CD8-positive, alpha-beta T cell (primary cell): ENCODE measurements at regions of chr18 and their contacts with region 1.

Region 1: DNA sequence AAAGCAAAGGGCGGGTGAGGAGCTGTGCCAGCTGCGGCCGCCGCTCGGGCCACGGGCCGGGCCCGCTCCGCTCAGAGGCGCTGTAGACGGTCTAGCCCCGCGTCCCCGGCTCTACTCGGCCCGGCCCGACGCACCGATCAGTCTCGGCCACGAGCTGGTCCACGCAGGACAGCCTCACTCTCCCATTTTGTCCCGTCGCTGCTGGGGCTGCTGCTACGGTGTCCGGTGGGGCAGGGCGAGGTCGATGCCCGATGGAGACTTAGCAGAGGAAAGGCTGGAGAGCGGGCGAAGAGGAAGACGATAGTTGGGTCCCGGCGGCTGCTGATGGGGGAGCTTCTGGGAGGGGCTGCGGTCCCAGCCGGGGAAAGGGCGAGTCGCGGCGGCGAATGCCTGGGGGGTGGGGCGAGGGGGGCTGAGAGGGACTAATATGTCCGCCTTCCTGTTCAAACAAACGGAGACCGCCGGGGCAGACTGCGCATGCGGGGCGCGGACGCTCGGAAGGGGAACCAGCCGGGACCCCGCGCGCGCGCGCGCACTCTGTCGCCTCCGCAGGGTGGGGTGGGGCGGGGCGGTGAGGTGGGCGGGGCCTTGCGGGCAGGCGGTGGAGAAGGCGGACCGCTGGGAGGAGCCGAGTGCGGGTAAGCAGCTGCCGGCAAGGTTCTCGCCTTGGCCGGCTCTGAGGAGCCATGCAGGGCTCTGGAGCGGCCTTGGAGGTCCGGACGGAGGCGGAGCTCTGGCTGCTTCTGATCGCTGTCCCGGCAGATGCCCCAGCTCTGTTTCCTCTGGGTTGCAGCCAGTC is at the start of gene ROCK1:
- DNase-seq: peak; percentile 98 to 100 (median 99)
- ATAC-seq: peak; percentile 85
- H3K4me3 ChIP-seq: peak within 1 kb of the TSS; percentile 94 to 95
- H3K4me3 Mint-ChIP-seq: no peak within 1 kb of the TSS
- H3K27ac ChIP-seq: peak within 1 kb of the TSS; percentile 89 to 93
- H3K27ac Mint-ChIP-seq: peak within 1 kb of the TSS; percentile 90
- H3K4me1 ChIP-seq: peaks cover 31% of the 10 kb centered on the region
- H3K4me1 Mint-ChIP-seq: peaks cover 3% of the 10 kb centered on the region
- H3K27me3 ChIP-seq: no peaks in the 10 kb centered on the region
- H3K27me3 Mint-ChIP-seq: no peaks in the 10 kb centered on the region
- CTCF ChIP-seq: no peak
- total RNA-seq, gene ROCK1: 88.5 to 94.7 TPM

Region 2: DNA sequence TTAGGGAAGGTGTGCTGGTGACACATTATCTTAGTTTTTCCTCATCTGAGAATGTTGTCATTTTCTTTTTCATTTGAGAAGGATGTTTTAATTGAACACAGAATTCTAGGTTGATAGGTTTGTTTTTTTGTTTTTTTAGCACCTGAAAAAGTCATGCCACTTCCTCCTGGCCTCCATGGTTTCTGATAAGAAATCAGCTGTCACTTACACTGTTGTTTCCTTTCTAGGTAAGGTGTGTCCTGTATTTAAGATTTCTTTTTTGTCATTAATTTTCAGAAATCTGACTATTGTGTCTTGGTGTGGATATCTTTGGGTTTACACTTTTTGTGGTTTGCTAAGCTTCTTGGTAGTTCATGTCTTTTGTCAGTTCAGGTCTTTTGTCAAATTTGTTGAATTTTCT is 99.2 kb before region 1 on chr18:
- CTCF ChIA-PET with region 1: no interaction called
- POLR2A ChIA-PET with region 1: no interaction called
- intact Hi-C with region 1: loop called in 1 of 2 experiments (anchors 10 kb)
- DNase-seq: no peak
- ATAC-seq: no peak
- H3K4me3 ChIP-seq: no peak overlapping the region
- H3K4me3 Mint-ChIP-seq: no peak overlapping the region
- H3K27ac ChIP-seq: no peak overlapping the region
- H3K27ac Mint-ChIP-seq: peak overlapping the region; percentile 27
- H3K4me1 ChIP-seq: no peaks in the 10 kb centered on the region
- H3K4me1 Mint-ChIP-seq: peaks cover 12% of the 10 kb centered on the region
- H3K27me3 ChIP-seq: no peaks in the 10 kb centered on the region
- H3K27me3 Mint-ChIP-seq: no peaks in the 10 kb centered on the region
- CTCF ChIP-seq: no peak

Region 3: GRCh38 chr18:21054252-21054821 is 57.2 kb before region 1 on chr18:
- CTCF ChIA-PET with region 1: no interaction called
- POLR2A ChIA-PET with region 1: interaction called, 8 read pairs
- intact Hi-C with region 1: loop called (anchors 2 kb)
- DNase-seq: no peak
- ATAC-seq: no peak
- H3K4me3 ChIP-seq: no peak overlapping the region
- H3K4me3 Mint-ChIP-seq: no peak overlapping the region
- H3K27ac ChIP-seq: no peak overlapping the region
- H3K27ac Mint-ChIP-seq: no peak overlapping the region
- H3K4me1 ChIP-seq: peaks cover 39% of the 10 kb centered on the region
- H3K4me1 Mint-ChIP-seq: peaks cover 43% of the 10 kb centered on the region
- H3K27me3 ChIP-seq: no peaks in the 10 kb centered on the region
- H3K27me3 Mint-ChIP-seq: no peaks in the 10 kb centered on the region
- CTCF ChIP-seq: no peak

Region 4: DNA sequence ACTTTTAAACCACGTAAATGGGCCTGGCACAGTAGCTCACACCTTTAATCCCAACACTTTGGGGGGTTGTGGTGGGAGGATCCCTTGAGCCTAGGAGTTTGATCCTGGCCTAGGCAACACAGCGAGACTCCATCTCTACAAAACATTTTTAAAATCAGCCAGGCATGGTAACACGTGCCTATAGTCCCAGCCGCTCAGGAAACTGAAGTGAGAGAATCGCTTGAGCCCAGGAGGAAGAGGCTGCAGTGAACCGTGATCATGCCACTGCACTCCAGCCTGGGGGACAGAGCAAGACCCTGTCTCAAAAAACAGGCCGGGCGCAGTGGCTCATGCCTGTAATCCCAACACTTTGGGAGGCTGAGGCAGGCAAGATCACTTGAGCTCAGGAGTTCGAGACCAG is 12.1 kb before region 1 on chr18:
- CTCF ChIA-PET with region 1: no interaction called
- POLR2A ChIA-PET with region 1: interaction called, 4 read pairs
- intact Hi-C with region 1: loop called in 1 of 2 experiments (anchors 1 kb)
- DNase-seq: no peak
- ATAC-seq: no peak
- H3K4me3 ChIP-seq: no peak overlapping the region
- H3K4me3 Mint-ChIP-seq: peak overlapping the region; percentile 27
- H3K27ac ChIP-seq: no peak overlapping the region
- H3K27ac Mint-ChIP-seq: peak overlapping the region; percentile 46
- H3K4me1 ChIP-seq: peaks cover 57% of the 10 kb centered on the region
- H3K4me1 Mint-ChIP-seq: peaks cover 77% of the 10 kb centered on the region
- H3K27me3 ChIP-seq: no peaks in the 10 kb centered on the region
- H3K27me3 Mint-ChIP-seq: no peaks in the 10 kb centered on the region
- CTCF ChIP-seq: no peak

Region 5: DNA sequence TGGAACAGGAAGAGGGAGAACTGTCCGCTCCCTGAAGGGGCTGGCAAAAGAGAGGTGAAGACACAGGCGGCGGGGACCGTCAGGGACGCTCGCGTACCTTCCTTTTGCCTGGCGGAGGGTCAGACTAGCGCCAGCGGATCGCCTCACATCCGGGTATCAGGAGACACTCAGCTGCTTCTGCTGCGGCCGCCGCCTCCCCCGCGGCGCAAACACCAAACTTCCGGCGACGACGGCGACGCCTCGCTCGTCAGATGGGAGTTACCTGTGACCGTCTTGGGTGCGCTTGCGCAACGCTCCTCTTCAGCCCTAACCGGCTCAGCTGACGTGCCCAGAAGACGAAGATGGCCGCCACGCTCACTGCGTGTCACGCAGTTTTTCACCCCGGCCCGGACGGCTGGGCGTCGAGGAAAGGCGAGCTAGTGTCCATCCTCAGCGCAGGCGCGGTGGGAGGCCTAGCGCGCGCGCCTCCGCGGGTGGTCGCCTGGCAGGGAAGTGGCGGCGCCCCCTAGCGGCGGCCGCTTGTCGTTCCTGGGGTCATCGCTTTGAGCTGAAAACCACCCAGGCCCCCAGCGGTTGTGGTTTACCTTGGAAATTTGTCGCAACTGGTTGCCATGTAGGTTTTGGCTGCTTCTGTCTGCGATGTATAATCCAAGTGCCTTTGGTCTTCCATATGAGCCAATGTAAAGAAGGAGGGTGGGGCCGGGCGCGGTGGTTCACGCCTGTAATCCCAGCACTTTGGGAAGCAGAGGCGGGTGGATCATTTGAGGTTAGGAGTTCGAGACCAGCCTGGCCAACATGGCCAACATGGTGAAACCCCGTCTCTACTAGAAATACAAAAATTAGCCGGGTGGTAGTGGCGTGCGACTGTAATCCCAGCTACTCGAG is 489.2 kb after region 1 on chr18 and contains the start of gene ESCO1:
- CTCF ChIA-PET with region 1: no interaction called
- POLR2A ChIA-PET with region 1: interaction called, 9 read pairs
- intact Hi-C with region 1: loop called in 1 of 2 experiments (anchors 1 kb)
- DNase-seq: peak; percentile 87 to 99 (median 92)
- ATAC-seq: peak; percentile 87
- H3K4me3 ChIP-seq: peak within 1 kb of the TSS; percentile 88 to 100
- H3K4me3 Mint-ChIP-seq: peak within 1 kb of the TSS; percentile 95
- H3K27ac ChIP-seq: peak within 1 kb of the TSS; percentile 98 to 100
- H3K27ac Mint-ChIP-seq: peak within 1 kb of the TSS; percentile 98
- H3K4me1 ChIP-seq: peaks cover 24% of the 10 kb centered on the region
- H3K4me1 Mint-ChIP-seq: peaks cover 41% of the 10 kb centered on the region
- H3K27me3 ChIP-seq: no peaks in the 10 kb centered on the region
- H3K27me3 Mint-ChIP-seq: no peaks in the 10 kb centered on the region
- CTCF ChIP-seq: peak; percentile 97
- total RNA-seq, gene ESCO1: 37.3 to 38.8 TPM

Region 6: GRCh38 chr18:21704603-21705364 is 593.2 kb after region 1 on chr18 and contains the start of gene ABHD3:
- CTCF ChIA-PET with region 1: no interaction called
- POLR2A ChIA-PET with region 1: no interaction called
- intact Hi-C with region 1: loop called in 1 of 2 experiments (anchors 1 kb)
- DNase-seq: peak; percentile 83 to 96 (median 91)
- ATAC-seq: peak; percentile 92
- H3K4me3 ChIP-seq: peak within 1 kb of the TSS; percentile 81 to 99
- H3K4me3 Mint-ChIP-seq: peak within 1 kb of the TSS; percentile 96
- H3K27ac ChIP-seq: peak within 1 kb of the TSS; percentile 66 to 82
- H3K27ac Mint-ChIP-seq: peak within 1 kb of the TSS; percentile 94
- H3K4me1 ChIP-seq: peaks cover 25% of the 10 kb centered on the region
- H3K4me1 Mint-ChIP-seq: peaks cover 39% of the 10 kb centered on the region
- H3K27me3 ChIP-seq: no peaks in the 10 kb centered on the region
- H3K27me3 Mint-ChIP-seq: no peaks in the 10 kb centered on the region
- CTCF ChIP-seq: peak; percentile 41
- total RNA-seq, gene ABHD3: 28.9 to 34.3 TPM